Mammary epithelial cell (primary cell): ENCODE measurements at regions of chr15 and their contacts with region 1.

Region 1: GRCh38 chr15:59191855-59192237 is 14.8 kb upstream of the LDHAL6B start:
- DNase-seq: peak; percentile 98
- H3K4me3 ChIP-seq: no peak overlapping the region
- H3K27ac ChIP-seq: peak overlapping the region; percentile 96
- H3K4me1 ChIP-seq: peaks cover 27% of the 10 kb centered on the region
- H3K27me3 ChIP-seq: no peaks in the 10 kb centered on the region
- CTCF ChIP-seq: no peak

Region 2: DNA sequence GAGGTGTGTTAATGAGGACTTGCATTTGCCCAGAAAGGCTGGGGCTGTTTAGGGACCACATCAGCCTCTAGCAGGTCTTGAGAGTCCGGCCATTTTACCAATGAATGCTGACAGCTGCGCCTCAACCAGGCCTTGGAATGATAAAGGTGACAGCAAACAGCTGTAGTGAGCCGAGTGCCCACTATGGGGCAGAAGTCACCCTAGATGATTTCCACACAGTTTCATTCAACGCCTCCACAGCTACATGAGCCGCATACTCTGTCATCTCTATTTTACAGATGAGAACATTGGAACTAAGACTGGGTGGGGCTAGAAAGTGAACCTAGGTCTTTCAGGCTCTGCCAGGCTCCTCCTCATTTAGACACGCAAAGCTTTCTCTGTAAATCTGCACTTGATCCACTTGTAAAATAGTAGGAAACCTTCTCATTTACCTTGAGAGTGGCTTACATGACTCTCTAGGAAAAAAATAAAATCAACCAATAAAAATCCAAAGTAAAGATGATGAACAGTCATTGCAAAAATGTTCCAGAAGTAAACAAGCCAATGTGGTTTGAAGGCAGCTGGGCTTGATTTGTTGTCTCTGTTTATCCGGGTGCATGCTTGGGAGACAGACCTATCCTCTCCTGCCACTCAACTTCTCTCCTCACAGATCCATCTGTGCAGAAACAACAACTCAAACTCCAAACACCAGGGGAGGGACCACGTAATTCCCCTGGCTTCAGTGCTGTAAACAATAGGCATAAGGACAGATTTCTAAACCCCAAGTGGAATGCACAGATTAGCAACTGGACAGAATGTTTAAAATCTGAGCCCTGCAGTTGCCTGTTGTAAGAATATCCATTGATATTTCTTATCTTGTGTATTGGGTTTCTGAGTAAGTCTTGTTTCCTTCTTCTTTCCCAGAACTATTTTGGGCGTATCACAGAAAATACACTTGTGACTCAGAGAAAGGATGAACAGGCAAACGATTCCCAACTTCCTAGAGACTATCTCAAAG is 16.7 kb before region 1 on chr15:
- CTCF ChIA-PET with region 1: no interaction called
- dilution Hi-C with region 1: no loop called
- in situ Hi-C with region 1: no loop called
- intact Hi-C with region 1: loop called (anchors 1 kb)
- DNase-seq: peak; percentile 67
- H3K4me3 ChIP-seq: no peak overlapping the region
- H3K27ac ChIP-seq: no peak overlapping the region
- H3K4me1 ChIP-seq: peaks cover 18% of the 10 kb centered on the region
- H3K27me3 ChIP-seq: no peaks in the 10 kb centered on the region
- CTCF ChIP-seq: peak; percentile 26 to 34